A549 (cell line): ENCODE measurements at regions of chr10 and their contacts with region 1.

Region 1: GRCh38 chr10:30392564-30392990 is 41.4 kb upstream of the MAP3K8 start:
- DNase-seq: peak; percentile 79 to 91
- ATAC-seq: peak; percentile 98 to 100
- H3K4me3 ChIP-seq: no peak overlapping the region
- H3K27ac ChIP-seq: peak overlapping the region; percentile 55 to 72; a peak in 4 of 6 replicates
- H3K4me1 ChIP-seq: peaks cover 7% of the 10 kb centered on the region; the same call in 1 of the 3 replicates
- CTCF ChIP-seq: peak; percentile 94
- EP300 ChIP-seq: no peak
- POLR2A ChIP-seq: no peak
- RAD21 ChIP-seq: peak; percentile 98 to 99

Region 2: DNA sequence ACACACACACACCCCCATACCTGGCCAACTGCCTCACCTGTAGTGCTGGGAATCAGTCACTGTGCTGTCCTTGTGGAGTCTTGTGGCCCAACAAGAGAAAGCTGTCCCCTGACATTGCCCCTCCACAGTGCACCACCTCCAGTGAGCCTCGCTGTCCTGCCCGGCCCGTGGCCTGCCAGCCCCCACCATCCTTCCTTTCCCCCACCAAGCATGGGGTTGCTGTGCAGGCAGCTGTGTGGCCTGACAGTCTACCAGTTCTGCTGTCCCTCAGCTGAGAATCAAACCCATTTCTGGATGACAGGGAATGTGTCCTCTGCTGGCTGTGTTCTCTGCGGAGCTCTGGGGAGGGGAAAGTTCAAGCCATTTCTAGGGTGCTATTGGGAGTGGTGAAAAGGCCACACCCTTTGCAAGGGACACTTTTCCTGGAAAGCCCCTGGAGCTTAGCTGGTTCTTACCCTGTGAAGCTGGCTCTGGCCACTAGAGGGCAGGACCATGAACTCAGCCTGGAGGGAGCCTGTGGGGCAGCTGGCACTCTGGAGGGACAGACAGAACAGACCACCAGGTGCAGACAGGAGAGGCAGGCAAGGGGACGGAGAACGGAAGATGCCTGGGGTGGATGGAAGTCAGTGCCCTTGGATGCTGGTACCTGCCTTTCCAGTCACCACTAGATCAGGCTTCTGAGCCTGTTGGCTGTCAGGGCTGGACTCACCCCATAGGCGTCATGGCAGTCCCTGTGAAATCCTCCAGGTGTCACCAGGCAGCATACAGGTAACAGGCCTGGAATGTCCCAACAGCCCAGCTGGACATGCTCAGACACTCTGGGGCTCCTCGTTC is 33.0 kb before region 1 on chr10:
- CTCF ChIA-PET with region 1: interaction called, 12 read pairs
- POLR2A ChIA-PET with region 1: no interaction called
- DNase-seq: peak; percentile 67 to 79
- ATAC-seq: peak; percentile 94 to 95
- H3K4me3 ChIP-seq: no peak overlapping the region
- H3K27ac ChIP-seq: peak overlapping the region in 1 of 2 experiments; percentile 70; a peak in 2 of 6 replicates
- H3K4me1 ChIP-seq: peaks cover 6% of the 10 kb centered on the region; the same call in 2 of the 3 replicates
- CTCF ChIP-seq: peak; percentile 82
- EP300 ChIP-seq: no peak
- POLR2A ChIP-seq: no peak
- RAD21 ChIP-seq: peak in 1 of 2 experiments; percentile 26; a peak in 2 of 5 replicates

Region 3: GRCh38 chr10:30404540-30404939 is 12.0 kb after region 1 on chr10:
- CTCF ChIA-PET with region 1: interaction called, 15 read pairs
- POLR2A ChIA-PET with region 1: no interaction called
- DNase-seq: no peak
- ATAC-seq: no peak
- H3K4me3 ChIP-seq: no peak overlapping the region
- H3K27ac ChIP-seq: no peak overlapping the region
- H3K4me1 ChIP-seq: 0 out of 3 replicates have a peak, but pooled peaks cover 9% of the 10 kb centered on the region
- CTCF ChIP-seq: no peak
- EP300 ChIP-seq: no peak
- POLR2A ChIP-seq: no peak
- RAD21 ChIP-seq: no peak

Region 4: GRCh38 chr10:30433730-30434272 is 41.2 kb after region 1 on chr10 and contains the start of gene MAP3K8:
- CTCF ChIA-PET with region 1: interaction called, 12 read pairs
- POLR2A ChIA-PET with region 1: interaction called, 4 read pairs
- DNase-seq: peak; percentile 83 to 94
- ATAC-seq: peak; percentile 79 to 87
- H3K4me3 ChIP-seq: peak within 1 kb of the TSS; percentile 94
- H3K27ac ChIP-seq: peak within 1 kb of the TSS; percentile 91 to 97
- H3K4me1 ChIP-seq: peaks cover 55% of the 10 kb centered on the region
- CTCF ChIP-seq: no peak
- EP300 ChIP-seq: no peak
- POLR2A ChIP-seq: peak; percentile 92
- RAD21 ChIP-seq: no peak; a peak in 1 of 5 replicates
- polyA plus RNA-seq, gene MAP3K8: 45.1 and 50.8 TPM in 2 replicates

Region 5: DNA sequence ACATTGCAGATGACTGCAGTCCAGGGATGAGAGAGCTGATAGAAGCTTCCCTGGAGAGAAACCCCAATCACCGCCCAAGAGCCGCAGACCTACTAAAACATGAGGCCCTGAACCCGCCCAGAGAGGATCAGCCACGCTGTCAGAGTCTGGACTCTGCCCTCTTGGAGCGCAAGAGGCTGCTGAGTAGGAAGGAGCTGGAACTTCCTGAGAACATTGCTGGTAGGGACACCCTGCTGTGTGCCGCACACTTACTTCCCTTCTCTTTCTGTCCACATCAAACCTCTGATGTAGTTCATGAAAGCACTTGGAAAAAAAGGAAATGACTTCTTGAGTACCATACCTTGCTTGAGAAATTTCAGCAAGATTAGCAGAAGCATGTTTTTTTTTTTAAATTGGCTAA is 66.7 kb after region 1 on chr10:
- CTCF ChIA-PET with region 1: interaction called, 11 read pairs
- POLR2A ChIA-PET with region 1: no interaction called
- DNase-seq: no peak
- ATAC-seq: peak in 1 of 2 experiments; percentile 13; a peak in 3 of 6 replicates
- H3K4me3 ChIP-seq: no peak overlapping the region
- H3K27ac ChIP-seq: no peak overlapping the region; a peak in 1 of 6 replicates
- H3K4me1 ChIP-seq: peaks cover 35% of the 10 kb centered on the region
- CTCF ChIP-seq: no peak
- EP300 ChIP-seq: no peak
- POLR2A ChIP-seq: no peak
- RAD21 ChIP-seq: no peak

Region 6: GRCh38 chr10:30639946-30640786 is 247.6 kb after region 1 on chr10:
- CTCF ChIA-PET with region 1: interaction called, 22 read pairs
- POLR2A ChIA-PET with region 1: no interaction called
- DNase-seq: peak; percentile 49 to 77
- ATAC-seq: 0 out of 6 replicates have a peak, but pooled peaks of 1 of the 2 experiments have one; percentile 41
- H3K4me3 ChIP-seq: no peak overlapping the region
- H3K27ac ChIP-seq: no peak overlapping the region
- H3K4me1 ChIP-seq: peaks cover 16% of the 10 kb centered on the region
- CTCF ChIP-seq: peak; percentile 77
- EP300 ChIP-seq: no peak
- POLR2A ChIP-seq: no peak
- RAD21 ChIP-seq: peak; percentile 42 to 59; a peak in 4 of 5 replicates

Region 7: DNA sequence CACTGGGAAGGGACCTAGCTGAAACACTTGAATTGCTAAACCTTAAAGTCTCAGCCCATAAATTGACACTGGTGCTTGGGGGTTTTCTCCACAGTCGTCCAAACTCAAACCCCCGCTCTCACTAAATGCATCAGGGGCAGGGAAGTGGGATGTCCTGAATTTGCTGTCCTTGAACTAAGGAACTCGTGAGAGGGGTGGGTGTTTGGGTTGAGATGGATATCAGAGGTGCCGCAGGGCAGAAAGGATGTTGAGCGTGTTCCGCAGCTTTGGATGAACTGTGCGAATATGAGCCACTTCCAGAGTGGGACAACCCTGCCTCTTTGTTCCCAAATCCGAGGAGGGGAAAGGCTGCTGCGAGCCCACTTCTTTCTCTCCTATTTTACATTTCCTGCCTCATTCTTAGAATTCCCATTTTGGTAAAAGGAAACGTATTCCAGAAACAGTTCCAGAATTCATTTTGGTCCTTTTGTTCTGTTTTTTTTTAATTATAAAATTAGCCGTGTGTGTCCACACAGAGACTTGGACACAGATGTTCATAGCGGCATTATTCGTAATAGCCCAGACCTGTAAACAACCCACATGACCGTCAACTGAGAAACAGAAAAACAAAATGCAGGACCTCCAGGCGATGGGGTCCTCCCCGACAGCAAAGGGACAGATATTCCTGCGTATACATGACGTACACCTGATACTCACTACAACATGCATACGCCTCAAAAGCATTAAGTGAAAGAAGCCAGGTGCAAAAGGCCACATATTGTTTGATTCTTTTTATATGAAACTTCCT is 327.4 kb after region 1 on chr10:
- CTCF ChIA-PET with region 1: no interaction called
- POLR2A ChIA-PET with region 1: no interaction called
- DNase-seq: no peak
- ATAC-seq: no peak
- H3K4me3 ChIP-seq: no peak overlapping the region
- H3K27ac ChIP-seq: no peak overlapping the region
- H3K4me1 ChIP-seq: no peaks in the 10 kb centered on the region
- CTCF ChIP-seq: no peak
- EP300 ChIP-seq: no peak
- POLR2A ChIP-seq: no peak
- RAD21 ChIP-seq: no peak